ENCODE measurements at regions of chr20 and their contacts with region 1.

Region 1: DNA sequence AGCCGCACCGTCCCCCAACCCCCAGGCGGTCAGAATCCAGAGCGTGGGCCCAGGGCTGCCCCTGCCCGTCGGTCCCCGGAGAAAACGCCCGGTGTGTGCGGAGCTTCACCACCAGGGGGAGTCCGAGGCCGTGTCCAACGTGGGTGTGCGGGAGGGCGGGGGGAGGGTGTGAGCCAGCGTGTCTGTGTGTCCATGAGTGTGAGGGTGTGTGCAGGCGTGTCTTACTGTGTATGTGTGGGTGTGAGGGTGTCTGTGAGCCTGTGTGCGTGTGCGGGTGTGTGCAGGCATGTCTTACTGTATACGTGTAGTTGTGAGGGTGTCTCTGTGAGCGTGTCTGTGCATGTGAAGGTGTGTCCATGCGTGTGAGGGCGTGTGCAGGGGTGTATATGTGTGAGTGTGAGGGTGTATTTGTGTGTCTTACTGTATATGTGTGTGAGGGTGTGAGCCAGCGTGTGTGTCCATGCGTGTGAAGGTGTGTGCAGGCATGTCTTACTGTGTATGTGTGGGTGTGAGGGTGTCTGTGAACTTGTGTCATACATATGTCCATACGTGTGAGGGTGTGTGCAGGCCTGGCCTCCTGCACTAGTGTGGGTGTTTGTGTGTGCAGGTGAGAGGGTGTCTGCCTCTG is 24.6 kb upstream of the GATA5 start:
- DNase-seq: peak; percentile 58 to 81 (median 69)
- H3K4me3 ChIP-seq: no peak overlapping the region
- H3K4me3 Mint-ChIP-seq: peak overlapping the region in 1 of 7 donors; percentile 28
- H3K27ac ChIP-seq: no peak overlapping the region
- H3K27ac Mint-ChIP-seq: peak overlapping the region in 5 of 8 donors; percentile 1 to 79 (median 63)
- H3K4me1 ChIP-seq: no peaks in the 10 kb centered on the region
- H3K4me1 Mint-ChIP-seq: peaks cover 13 to 23% (median 20%) of the 10 kb centered on the region in 3 donors
- H3K27me3 ChIP-seq: no peaks in the 10 kb centered on the region
- H3K27me3 Mint-ChIP-seq: peaks cover 3% of the 10 kb centered on the region in 2 donors

Region 2: GRCh38 chr20:62523473-62524203 is 23.3 kb after region 1 on chr20:
- CTCF ChIA-PET with region 1: no interaction called
- POLR2A ChIA-PET with region 1: no interaction called
- DNase-seq: peak in 4 of 5 donors; percentile 35 to 80 (median 47)
- H3K4me3 ChIP-seq: no peak overlapping the region
- H3K4me3 Mint-ChIP-seq: peak overlapping the region in 1 of 7 donors; percentile 23
- H3K27ac ChIP-seq: peak overlapping the region; percentile 38
- H3K27ac Mint-ChIP-seq: no peak overlapping the region
- H3K4me1 ChIP-seq: no peaks in the 10 kb centered on the region
- H3K4me1 Mint-ChIP-seq: peaks cover 0 to 13% (median 4%) of the 10 kb centered on the region in 3 donors
- H3K27me3 ChIP-seq: no peaks in the 10 kb centered on the region
- H3K27me3 Mint-ChIP-seq: peaks cover 18 to 40% of the 10 kb centered on the region in 2 donors

Region 3: DNA sequence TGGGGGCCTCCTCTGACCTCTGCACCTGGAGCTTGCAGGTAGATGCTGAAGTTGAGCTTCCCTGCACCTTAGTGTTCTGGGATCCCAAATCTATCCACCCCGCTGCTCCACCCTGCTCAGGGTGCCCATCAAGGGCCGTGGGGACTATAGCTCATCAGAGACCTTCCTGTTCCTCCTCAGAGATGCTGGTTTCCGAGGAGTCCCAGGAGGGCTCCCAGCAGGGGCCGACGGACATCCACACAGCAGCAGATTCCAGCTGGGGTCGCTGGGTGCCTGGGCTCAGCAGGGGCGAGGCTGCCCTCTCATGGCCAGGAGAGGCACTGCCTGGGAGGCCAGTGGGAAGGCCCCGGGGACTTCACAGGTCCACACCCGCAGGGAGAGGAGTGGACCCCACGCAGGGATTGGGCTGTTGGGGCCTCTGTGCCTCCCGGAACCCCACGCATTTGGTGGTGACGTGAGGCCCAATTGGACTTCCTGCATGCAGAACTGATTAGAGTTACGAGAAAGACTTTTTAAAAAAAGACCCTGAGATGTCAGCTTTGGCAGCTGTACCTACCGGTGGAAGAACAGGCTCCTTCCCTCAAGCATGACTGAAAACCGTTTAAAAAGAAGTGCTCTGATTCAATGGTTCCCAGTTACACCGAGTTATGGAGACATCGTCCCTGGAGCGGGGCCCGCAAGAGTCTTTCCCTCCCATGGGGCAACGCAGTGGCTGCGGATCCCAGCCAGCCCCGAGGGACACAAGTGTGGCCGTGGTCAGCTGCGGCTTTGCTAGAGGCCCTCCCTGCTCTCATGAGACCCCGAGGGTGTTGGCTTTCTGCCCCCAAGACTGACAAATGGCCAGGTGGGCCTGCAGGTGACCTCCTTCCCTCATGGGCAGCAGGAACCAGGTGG is 116.6 kb after region 1 on chr20:
- CTCF ChIA-PET with region 1: interaction called, 15 read pairs
- POLR2A ChIA-PET with region 1: no interaction called
- DNase-seq: peak; percentile 45 to 75 (median 52)
- H3K4me3 ChIP-seq: no peak overlapping the region
- H3K4me3 Mint-ChIP-seq: peak overlapping the region in 4 of 7 donors; percentile 44 to 80 (median 44)
- H3K27ac ChIP-seq: no peak overlapping the region
- H3K27ac Mint-ChIP-seq: peak overlapping the region in 7 of 8 donors; percentile 77 to 92 (median 86)
- H3K4me1 ChIP-seq: peaks cover 23% of the 10 kb centered on the region
- H3K4me1 Mint-ChIP-seq: peaks cover 22 to 32% (median 23%) of the 10 kb centered on the region in 3 donors
- H3K27me3 ChIP-seq: no peaks in the 10 kb centered on the region
- H3K27me3 Mint-ChIP-seq: no peaks in the 10 kb centered on the region